Natural killer cell (primary cell): ENCODE measurements at regions of chr11 and their contacts with region 1.

Region 1: GRCh38 chr11:76056876-76057275 is 149.4 kb downstream of the WNT11 start:
- DNase-seq: no peak
- ATAC-seq: no peak
- H3K4me3 ChIP-seq: no peak overlapping the region
- H3K4me3 Mint-ChIP-seq: no peak overlapping the region
- H3K27ac ChIP-seq: no peak overlapping the region
- H3K27ac Mint-ChIP-seq: no peak overlapping the region
- H3K4me1 ChIP-seq: no peaks in the 10 kb centered on the region
- H3K4me1 Mint-ChIP-seq: peaks cover 23 to 28% of the 10 kb centered on the region in 2 donors
- H3K27me3 ChIP-seq: no peaks in the 10 kb centered on the region
- H3K27me3 Mint-ChIP-seq: no peaks in the 10 kb centered on the region
- CTCF ChIP-seq: no peak

Region 2: GRCh38 chr11:75996523-75997442 is 60.1 kb before region 1 on chr11:
- intact Hi-C with region 1: loop called (anchors 10 kb)
- DNase-seq: no peak
- ATAC-seq: no peak
- H3K4me3 ChIP-seq: no peak overlapping the region
- H3K4me3 Mint-ChIP-seq: no peak overlapping the region
- H3K27ac ChIP-seq: no peak overlapping the region
- H3K27ac Mint-ChIP-seq: no peak overlapping the region
- H3K4me1 ChIP-seq: no peaks in the 10 kb centered on the region
- H3K4me1 Mint-ChIP-seq: peaks cover 14 to 21% of the 10 kb centered on the region in 2 donors
- H3K27me3 ChIP-seq: no peaks in the 10 kb centered on the region
- H3K27me3 Mint-ChIP-seq: no peaks in the 10 kb centered on the region
- CTCF ChIP-seq: no peak